ENCODE measurements at regions of chr17 and their contacts with region 1.

Region 1: GRCh38 chr17:62724398-62725146 is 83.5 kb downstream of the MARCHF10 start:
- DNase-seq: peak; percentile 92
- ATAC-seq: peak; percentile 98
- H3K4me3 Mint-ChIP-seq: peak overlapping the region; percentile 11
- H3K27ac Mint-ChIP-seq: no peak overlapping the region
- H3K4me1 Mint-ChIP-seq: peaks cover 26% of the 10 kb centered on the region
- H3K27me3 Mint-ChIP-seq: peaks cover 51% of the 10 kb centered on the region

Region 2: DNA sequence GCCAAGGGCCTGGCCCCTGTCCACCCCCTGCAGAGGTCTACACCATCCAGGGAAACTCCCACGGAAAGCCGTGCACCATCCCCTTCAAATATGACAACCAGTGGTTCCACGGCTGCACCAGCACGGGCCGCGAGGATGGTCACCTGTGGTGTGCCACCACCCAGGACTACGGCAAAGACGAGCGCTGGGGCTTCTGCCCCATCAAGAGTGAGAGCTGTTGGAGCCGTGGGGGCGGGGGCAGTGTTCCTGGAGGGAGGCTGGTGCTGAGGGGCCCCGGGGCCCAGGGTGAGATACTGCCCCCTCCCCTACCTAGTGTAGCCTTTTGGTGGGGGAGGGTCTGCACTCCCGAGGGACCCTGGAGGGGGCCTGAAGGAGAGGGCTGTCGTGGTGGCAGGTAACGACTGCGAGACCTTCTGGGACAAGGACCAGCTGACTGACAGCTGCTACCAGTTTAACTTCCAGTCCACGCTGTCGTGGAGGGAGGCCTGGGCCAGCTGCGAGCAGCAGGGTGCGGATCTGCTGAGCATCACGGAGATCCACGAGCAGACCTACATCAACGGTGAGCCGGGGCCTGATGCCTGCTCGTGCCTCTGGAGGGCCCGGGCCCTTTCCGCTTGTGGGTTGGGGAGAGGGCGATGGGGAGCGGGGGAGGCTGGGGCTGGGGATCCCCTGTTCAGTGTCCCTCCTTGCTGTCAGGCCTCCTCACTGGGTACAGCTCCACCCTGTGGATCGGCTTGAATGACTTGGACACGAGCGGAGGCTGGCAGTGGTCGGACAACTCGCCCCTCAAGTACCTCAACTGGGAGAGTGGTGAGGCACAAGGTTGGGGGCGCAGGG is 58.3 kb before region 1 on chr17:
- CTCF ChIA-PET with region 1: no interaction called
- POLR2A ChIA-PET with region 1: no interaction called
- intact Hi-C with region 1: no loop called
- DNase-seq: no peak
- ATAC-seq: no peak
- H3K4me3 Mint-ChIP-seq: no peak overlapping the region
- H3K27ac Mint-ChIP-seq: no peak overlapping the region
- H3K4me1 Mint-ChIP-seq: no peaks in the 10 kb centered on the region
- H3K27me3 Mint-ChIP-seq: peaks cover 2% of the 10 kb centered on the region

Region 3: DNA sequence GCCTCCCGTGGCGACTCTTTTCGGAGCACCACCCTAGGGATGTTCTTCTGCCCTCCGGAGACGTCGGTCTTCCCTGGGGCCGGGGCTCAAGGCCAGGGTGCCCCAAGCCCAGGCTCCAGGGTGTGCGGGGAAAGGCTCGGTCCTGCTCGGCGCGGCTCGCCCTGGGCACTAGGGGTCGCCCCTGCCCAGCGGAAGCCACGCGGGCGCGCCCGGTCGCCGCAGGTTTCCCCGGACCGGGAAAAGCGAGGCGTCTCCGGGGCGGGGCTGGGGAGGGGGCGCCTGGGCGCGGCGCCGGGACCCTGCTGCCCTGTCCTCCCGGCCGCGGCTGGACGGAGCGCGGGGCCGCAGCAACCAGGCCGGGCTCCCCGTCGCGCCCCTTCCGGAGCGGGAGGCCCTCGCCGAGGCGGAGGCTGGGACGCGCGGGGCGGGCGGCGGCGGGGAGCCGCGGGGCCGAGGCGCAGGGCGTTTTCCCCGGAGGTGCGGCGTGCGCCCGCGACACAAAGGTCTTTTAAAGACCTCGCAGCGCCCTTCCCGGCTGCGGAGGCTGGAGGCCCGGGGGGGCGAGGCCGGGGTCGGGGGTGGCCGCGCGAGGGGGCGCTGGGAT is 20.7 kb before region 1 on chr17:
- CTCF ChIA-PET with region 1: interaction called, 3 read pairs
- POLR2A ChIA-PET with region 1: no interaction called
- intact Hi-C with region 1: loop called in 1 of 2 experiments (anchors 1 kb)
- DNase-seq: peak; percentile 81
- ATAC-seq: peak; percentile 92
- H3K4me3 Mint-ChIP-seq: peak overlapping the region; percentile 32
- H3K27ac Mint-ChIP-seq: no peak overlapping the region
- H3K4me1 Mint-ChIP-seq: peaks cover 6% of the 10 kb centered on the region
- H3K27me3 Mint-ChIP-seq: peaks cover 34% of the 10 kb centered on the region

Region 4: GRCh38 chr17:62737513-62737912 is 12.9 kb after region 1 on chr17:
- CTCF ChIA-PET with region 1: interaction called, 5 read pairs
- POLR2A ChIA-PET with region 1: interaction called, 5 read pairs
- intact Hi-C with region 1: loop called (anchors 1 kb)
- DNase-seq: peak; percentile 75
- ATAC-seq: peak; percentile 85
- H3K4me3 Mint-ChIP-seq: no peak overlapping the region
- H3K27ac Mint-ChIP-seq: no peak overlapping the region
- H3K4me1 Mint-ChIP-seq: peaks cover 17% of the 10 kb centered on the region
- H3K27me3 Mint-ChIP-seq: peaks cover 31% of the 10 kb centered on the region

Region 5: DNA sequence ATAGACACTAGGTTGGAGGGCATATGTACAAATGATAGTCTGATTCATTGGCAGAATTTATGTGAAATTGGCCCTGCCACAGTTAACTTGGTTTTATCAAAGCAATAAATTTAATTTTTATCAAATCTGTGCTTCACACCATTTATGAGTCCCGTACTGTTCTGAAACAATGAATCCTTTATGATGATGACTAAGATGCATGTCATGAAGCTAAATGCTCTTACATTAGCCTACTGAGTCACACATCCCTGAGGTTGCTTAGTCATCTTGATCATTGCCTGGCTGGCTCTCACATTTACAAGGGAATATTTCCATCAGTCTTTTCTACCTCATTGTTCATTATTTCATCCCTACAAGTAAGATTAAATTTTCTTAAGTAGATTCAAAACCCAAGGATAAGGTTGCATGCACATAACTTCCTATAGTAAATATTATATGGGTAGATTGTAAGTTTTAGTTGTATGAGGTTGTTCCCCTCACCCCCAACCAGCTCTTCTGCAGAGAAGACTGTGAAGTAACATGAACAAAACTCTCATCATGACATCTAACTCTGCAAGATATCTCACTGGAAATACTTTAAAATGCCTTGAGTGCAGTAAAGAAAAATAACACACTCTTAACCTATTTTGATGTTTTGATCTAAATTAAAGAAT is 550.9 kb after region 1 on chr17:
- CTCF ChIA-PET with region 1: no interaction called
- POLR2A ChIA-PET with region 1: no interaction called
- intact Hi-C with region 1: loop called in 1 of 2 experiments (anchors 1 kb)
- DNase-seq: peak; percentile 51
- ATAC-seq: peak; percentile 97
- H3K4me3 Mint-ChIP-seq: no peak overlapping the region
- H3K27ac Mint-ChIP-seq: no peak overlapping the region
- H3K4me1 Mint-ChIP-seq: peaks cover 31% of the 10 kb centered on the region
- H3K27me3 Mint-ChIP-seq: no peaks in the 10 kb centered on the region

Measured in activated CD4-positive, alpha-beta T cell treated with anti-CD3 and anti-CD28 coated beads for 36 hours (primary cell).